Caco-2 (cell line): ENCODE measurements at regions of chr17 and their contacts with region 1.

Region 1: GRCh38 chr17:59004338-59005111 is 102.2 kb downstream of the TRIM37 start:
- DNase-seq: peak; percentile 50 to 74
- H3K4me3 ChIP-seq: no peak overlapping the region
- H3K4me3 Mint-ChIP-seq: no peak overlapping the region
- H3K27ac Mint-ChIP-seq: no peak overlapping the region
- H3K4me1 ChIP-seq: no peaks in the 10 kb centered on the region
- H3K4me1 Mint-ChIP-seq: no peaks in the 10 kb centered on the region
- H3K27me3 ChIP-seq: no peaks in the 10 kb centered on the region
- H3K27me3 Mint-ChIP-seq: no peaks in the 10 kb centered on the region
- CTCF ChIP-seq: peak; percentile 94

Region 2: DNA sequence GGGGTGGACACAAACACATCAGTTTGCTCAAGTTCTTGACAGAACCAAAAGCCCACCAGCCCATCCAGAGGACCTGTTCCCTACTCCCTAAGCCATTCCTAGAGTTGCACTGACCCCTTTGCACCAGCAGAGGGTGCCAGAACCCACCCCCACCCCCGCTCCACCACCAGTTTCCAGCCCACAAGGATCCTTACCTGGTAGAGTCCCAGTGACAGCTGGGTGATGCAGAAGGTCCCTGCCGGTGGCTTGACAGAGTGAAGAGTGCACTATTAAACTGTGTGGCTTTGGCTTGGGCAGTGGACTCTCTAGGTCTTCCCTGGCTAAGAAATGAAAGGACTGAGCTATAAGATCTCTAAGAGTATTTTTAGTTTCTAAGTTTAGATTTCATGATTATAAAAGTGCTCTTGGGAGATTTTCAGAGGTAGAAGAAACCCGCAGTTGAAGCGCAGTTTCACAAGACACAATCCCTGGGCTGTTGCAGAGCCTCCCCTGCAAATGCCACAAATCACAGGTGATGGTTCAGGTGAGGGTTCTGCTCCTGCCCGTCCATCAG is 416.7 kb before region 1 on chr17:
- CTCF ChIA-PET with region 1: no interaction called
- POLR2A ChIA-PET with region 1: no interaction called
- intact Hi-C with region 1: loop called (anchors 1 kb)
- DNase-seq: peak; percentile 74 to 79
- H3K4me3 ChIP-seq: no peak overlapping the region
- H3K4me3 Mint-ChIP-seq: no peak overlapping the region
- H3K27ac Mint-ChIP-seq: no peak overlapping the region
- H3K4me1 ChIP-seq: no peaks in the 10 kb centered on the region
- H3K4me1 Mint-ChIP-seq: no peaks in the 10 kb centered on the region
- H3K27me3 ChIP-seq: no peaks in the 10 kb centered on the region
- H3K27me3 Mint-ChIP-seq: peaks cover 5% of the 10 kb centered on the region
- CTCF ChIP-seq: peak; percentile 93 to 98

Region 3: DNA sequence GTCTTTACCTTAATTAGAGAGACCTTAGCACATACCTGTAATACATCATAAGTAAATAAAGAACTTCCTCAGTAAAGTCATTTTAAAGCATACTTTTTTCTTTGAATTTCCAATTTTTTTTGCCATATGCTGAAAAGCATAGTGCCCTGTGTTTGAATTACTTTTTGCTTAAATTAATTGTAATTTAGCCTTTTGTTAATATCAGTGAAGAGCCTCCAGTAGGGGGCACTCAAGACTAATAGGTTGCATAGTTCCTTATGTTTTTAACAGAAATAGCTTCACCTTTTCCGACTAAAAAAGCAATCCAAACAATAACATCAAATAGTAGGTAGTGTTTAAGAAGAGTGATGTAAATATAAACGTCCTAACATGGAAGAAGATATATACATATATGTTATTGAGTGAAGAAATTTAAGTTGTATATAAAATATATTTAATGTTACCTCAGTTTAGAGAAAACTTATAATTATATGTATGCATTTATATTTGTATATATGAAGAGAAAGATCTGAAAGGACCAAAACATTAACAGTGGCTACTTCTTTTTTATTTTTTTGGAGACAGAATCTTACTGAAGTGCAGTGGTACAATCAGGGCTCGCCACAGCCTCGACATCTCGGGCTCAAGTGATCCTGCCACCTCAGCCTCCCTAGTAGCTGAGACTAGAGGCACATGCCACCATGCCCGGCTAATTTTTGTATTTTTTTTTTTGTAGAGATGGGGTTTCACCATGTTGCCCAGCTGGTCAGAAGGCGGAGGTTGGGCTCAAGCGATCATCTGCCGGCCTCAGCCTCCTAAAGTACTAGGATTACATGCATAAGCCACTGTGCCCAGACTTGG is 293.4 kb before region 1 on chr17:
- CTCF ChIA-PET with region 1: interaction called, 16 read pairs
- POLR2A ChIA-PET with region 1: no interaction called
- intact Hi-C with region 1: loop called (anchors 1 kb)
- DNase-seq: peak in 1 of 2 experiments; percentile 55
- H3K4me3 ChIP-seq: no peak overlapping the region
- H3K4me3 Mint-ChIP-seq: no peak overlapping the region
- H3K27ac Mint-ChIP-seq: no peak overlapping the region
- H3K4me1 ChIP-seq: no peaks in the 10 kb centered on the region
- H3K4me1 Mint-ChIP-seq: no peaks in the 10 kb centered on the region
- H3K27me3 ChIP-seq: no peaks in the 10 kb centered on the region
- H3K27me3 Mint-ChIP-seq: no peaks in the 10 kb centered on the region
- CTCF ChIP-seq: peak; percentile 65 to 82

Region 4: DNA sequence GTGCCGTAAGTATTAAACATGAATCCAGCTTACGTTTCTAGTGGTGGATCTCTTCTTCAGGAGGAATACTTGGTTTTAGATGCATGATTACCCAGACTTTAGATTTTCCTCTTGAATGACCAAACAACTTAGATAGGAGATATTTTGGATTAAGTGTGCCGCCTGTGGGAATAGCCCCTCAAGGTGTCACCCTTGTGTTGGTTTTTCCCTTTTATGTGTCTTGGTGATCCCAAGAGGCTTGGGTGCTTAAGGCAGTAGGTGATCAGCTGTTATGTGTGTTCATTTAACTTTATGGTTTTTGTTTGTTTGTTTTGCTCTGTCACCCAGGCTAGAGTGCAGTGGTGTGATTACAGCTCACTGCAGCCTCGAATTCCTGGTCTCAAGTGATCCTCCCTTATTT is 133.8 kb before region 1 on chr17:
- CTCF ChIA-PET with region 1: no interaction called
- POLR2A ChIA-PET with region 1: no interaction called
- intact Hi-C with region 1: loop called (anchors 10 kb)
- DNase-seq: no peak
- H3K4me3 ChIP-seq: no peak overlapping the region
- H3K4me3 Mint-ChIP-seq: no peak overlapping the region
- H3K27ac Mint-ChIP-seq: no peak overlapping the region
- H3K4me1 ChIP-seq: no peaks in the 10 kb centered on the region
- H3K4me1 Mint-ChIP-seq: no peaks in the 10 kb centered on the region
- H3K27me3 ChIP-seq: no peaks in the 10 kb centered on the region
- H3K27me3 Mint-ChIP-seq: peaks cover 3% of the 10 kb centered on the region
- CTCF ChIP-seq: no peak

Region 5: DNA sequence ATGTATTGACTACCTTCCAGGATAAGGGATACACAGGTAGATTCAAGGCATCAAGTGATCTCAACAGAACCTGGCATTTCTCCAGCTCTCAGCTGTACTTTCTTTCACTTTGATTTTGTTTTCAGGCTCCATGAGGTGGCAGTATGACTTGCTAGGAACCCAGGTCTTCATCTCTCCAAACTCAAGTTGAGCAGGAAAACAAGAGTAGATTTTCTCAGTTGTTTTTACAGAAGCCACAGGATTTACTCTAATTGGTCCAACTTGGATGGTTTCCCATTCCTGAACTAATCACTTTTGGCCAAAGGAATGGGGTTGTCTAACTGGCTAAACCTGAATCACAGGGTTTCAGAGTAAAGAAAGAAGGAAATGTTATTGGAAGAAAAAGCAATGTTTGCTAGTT is 44.5 kb before region 1 on chr17:
- CTCF ChIA-PET with region 1: interaction called, 5 read pairs
- POLR2A ChIA-PET with region 1: no interaction called
- intact Hi-C with region 1: loop called (anchors 1 kb)
- DNase-seq: peak in 1 of 2 experiments; percentile 47
- H3K4me3 ChIP-seq: no peak overlapping the region
- H3K4me3 Mint-ChIP-seq: no peak overlapping the region
- H3K27ac Mint-ChIP-seq: no peak overlapping the region
- H3K4me1 ChIP-seq: no peaks in the 10 kb centered on the region
- H3K4me1 Mint-ChIP-seq: peaks cover 6% of the 10 kb centered on the region
- H3K27me3 ChIP-seq: no peaks in the 10 kb centered on the region
- H3K27me3 Mint-ChIP-seq: no peaks in the 10 kb centered on the region
- CTCF ChIP-seq: peak in 1 of 2 experiments; percentile 28